Naive thymus-derived CD4-positive, alpha-beta T cell (primary cell): ENCODE measurements at regions of chr19 and their contacts with region 1.

Region 1: GRCh38 chr19:19063183-19064097 is at the start of gene SLC25A42:
- DNase-seq: peak; percentile 93 to 100 (median 99)
- ATAC-seq: peak; percentile 95
- H3K4me3 ChIP-seq: peak within 1 kb of the TSS; percentile 82
- H3K4me3 Mint-ChIP-seq: peak within 1 kb of the TSS; percentile 83 to 99 (median 92)
- H3K27ac ChIP-seq: peak within 1 kb of the TSS; percentile 83
- H3K27ac Mint-ChIP-seq: peak within 1 kb of the TSS; percentile 75 to 98 (median 83)
- H3K4me1 ChIP-seq: peaks cover 11 to 15% of the 10 kb centered on the region in 2 donors
- H3K4me1 Mint-ChIP-seq: peaks cover 5 to 41% (median 35%) of the 10 kb centered on the region in 7 donors
- H3K27me3 ChIP-seq: no peaks in the 10 kb centered on the region
- H3K27me3 Mint-ChIP-seq: no peaks in the 10 kb centered on the region
- total RNA-seq, gene SLC25A42: 19.0 to 36.1 (median 21.6) TPM

Region 2: DNA sequence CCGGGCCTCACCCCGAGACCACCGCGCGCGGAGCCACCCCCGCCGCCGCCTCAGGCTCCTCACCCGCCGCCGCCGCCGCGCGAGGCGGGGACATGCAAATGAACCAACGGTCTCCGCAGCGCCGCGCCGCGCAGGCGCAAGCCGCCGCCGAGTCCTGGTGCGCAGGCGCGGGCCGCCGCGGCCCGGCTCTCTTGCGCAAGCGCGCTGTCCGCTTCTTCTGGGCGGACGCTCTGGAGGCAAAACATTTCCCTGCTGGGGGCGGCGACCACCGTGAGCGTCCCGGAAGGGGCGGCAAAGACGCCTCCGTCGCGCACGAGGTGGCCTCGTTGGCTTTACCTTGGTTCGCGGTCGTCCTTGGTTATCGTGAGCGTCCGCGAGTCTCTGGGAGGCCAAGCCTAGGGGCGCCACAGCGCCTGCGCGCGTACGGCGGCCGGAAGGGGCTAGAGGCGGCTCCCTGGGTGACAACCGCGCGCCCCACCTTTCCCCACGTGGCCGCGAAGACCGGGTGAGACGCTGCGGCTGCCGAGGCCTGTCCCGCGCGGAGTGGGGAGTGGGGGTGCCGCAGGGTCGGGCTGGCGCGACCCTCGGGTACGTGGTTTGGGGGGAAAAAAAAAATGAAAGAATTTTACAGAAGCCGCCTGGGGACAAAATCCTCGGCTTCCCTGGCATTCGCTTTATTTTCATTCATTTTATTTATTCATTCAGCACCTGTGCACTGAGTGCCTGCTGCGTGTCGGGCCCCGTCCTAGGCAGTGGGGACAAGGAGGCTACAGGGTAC is 29.8 kb before region 1 on chr19 and contains the starts of genes ARMC6 and SUGP2:
- CTCF ChIA-PET with region 1: no interaction called
- POLR2A ChIA-PET with region 1: interaction called, 4 read pairs
- intact Hi-C with region 1: loop called (anchors 1 kb)
- DNase-seq: peak; percentile 84 to 96 (median 94)
- ATAC-seq: peak; percentile 87
- H3K4me3 ChIP-seq: peak within 1 kb of the TSS; percentile 84
- H3K4me3 Mint-ChIP-seq: peak within 1 kb of the TSS; percentile 88 to 100 (median 96)
- H3K27ac ChIP-seq: peak within 1 kb of the TSS; percentile 86
- H3K27ac Mint-ChIP-seq: peak within 1 kb of the TSS; percentile 86 to 100 (median 94)
- H3K4me1 ChIP-seq: peaks cover 14 to 16% of the 10 kb centered on the region in 2 donors
- H3K4me1 Mint-ChIP-seq: peaks cover 16 to 40% (median 36%) of the 10 kb centered on the region in 7 donors
- H3K27me3 ChIP-seq: no peaks in the 10 kb centered on the region
- H3K27me3 Mint-ChIP-seq: no peaks in the 10 kb centered on the region
- total RNA-seq, gene ARMC6: 14.0 to 32.6 (median 15.0) TPM
- total RNA-seq, gene SUGP2: 116 to 145 (median 129) TPM

Region 3: GRCh38 chr19:19098703-19099632 is 35.5 kb after region 1 on chr19:
- CTCF ChIA-PET with region 1: no interaction called
- POLR2A ChIA-PET with region 1: no interaction called
- intact Hi-C with region 1: no loop called
- DNase-seq: no peak
- ATAC-seq: no peak
- H3K4me3 ChIP-seq: no peak overlapping the region
- H3K4me3 Mint-ChIP-seq: no peak overlapping the region
- H3K27ac ChIP-seq: no peak overlapping the region
- H3K27ac Mint-ChIP-seq: peak overlapping the region in 1 of 9 donors; percentile 29
- H3K4me1 ChIP-seq: no peaks in the 10 kb centered on the region
- H3K4me1 Mint-ChIP-seq: peaks cover 0 to 2% (median 0%) of the 10 kb centered on the region in 7 donors
- H3K27me3 ChIP-seq: no peaks in the 10 kb centered on the region
- H3K27me3 Mint-ChIP-seq: no peaks in the 10 kb centered on the region

Region 4: GRCh38 chr19:19203012-19203856 is 139.8 kb after region 1 on chr19 and contains the start of gene NR2C2AP:
- CTCF ChIA-PET with region 1: no interaction called
- POLR2A ChIA-PET with region 1: no interaction called
- intact Hi-C with region 1: loop called in 1 of 2 experiments (anchors 1 kb)
- DNase-seq: peak; percentile 80 to 94 (median 89)
- ATAC-seq: peak; percentile 95
- H3K4me3 ChIP-seq: peak within 1 kb of the TSS; percentile 95
- H3K4me3 Mint-ChIP-seq: peak within 1 kb of the TSS; percentile 90 to 94 (median 92)
- H3K27ac ChIP-seq: peak within 1 kb of the TSS; percentile 89
- H3K27ac Mint-ChIP-seq: peak within 1 kb of the TSS; percentile 88 to 96 (median 93)
- H3K4me1 ChIP-seq: peaks cover 23% of the 10 kb centered on the region in 2 donors
- H3K4me1 Mint-ChIP-seq: peaks cover 22 to 36% (median 30%) of the 10 kb centered on the region in 7 donors
- H3K27me3 ChIP-seq: no peaks in the 10 kb centered on the region
- H3K27me3 Mint-ChIP-seq: peaks cover 0 to 12% (median 0%) of the 10 kb centered on the region in 5 donors
- total RNA-seq, gene NR2C2AP: 13.8 to 33.4 (median 28.7) TPM